Mammary epithelial cell (primary cell): ENCODE measurements at regions of chr3 and their contacts with region 1.

Region 1: DNA sequence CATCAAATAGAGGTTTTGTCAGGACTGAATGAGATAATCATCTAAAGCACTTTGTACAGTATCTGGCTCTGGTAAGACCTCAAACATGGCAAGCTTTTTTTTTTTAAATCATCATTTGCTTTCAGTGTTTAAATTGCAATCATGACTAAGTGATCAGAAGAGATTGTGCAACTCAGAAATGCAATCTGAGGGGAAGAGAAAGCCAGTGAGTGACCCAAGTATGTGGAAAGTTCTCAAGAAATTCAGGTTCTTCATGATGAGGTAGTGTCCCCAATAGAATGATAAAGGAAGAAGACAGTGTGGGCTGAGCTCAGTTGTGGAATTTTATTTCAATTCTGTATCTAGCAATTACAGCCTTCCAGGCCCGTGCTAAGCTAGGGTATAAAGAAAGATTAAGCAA is 132.2 kb upstream of the TBC1D5 start:
- DNase-seq: no peak
- H3K4me3 ChIP-seq: no peak overlapping the region
- H3K27ac ChIP-seq: no peak overlapping the region
- H3K4me1 ChIP-seq: no peaks in the 10 kb centered on the region
- H3K27me3 ChIP-seq: no peaks in the 10 kb centered on the region
- CTCF ChIP-seq: no peak

Region 2: GRCh38 chr3:16378920-16379319 is 1495.7 kb before region 1 on chr3:
- CTCF ChIA-PET with region 1: interaction called, 21 read pairs
- dilution Hi-C with region 1: no loop called
- in situ Hi-C with region 1: no loop called
- intact Hi-C with region 1: no loop called
- DNase-seq: peak; percentile 56
- H3K4me3 ChIP-seq: no peak overlapping the region
- H3K27ac ChIP-seq: no peak overlapping the region
- H3K4me1 ChIP-seq: no peaks in the 10 kb centered on the region
- H3K27me3 ChIP-seq: no peaks in the 10 kb centered on the region
- CTCF ChIP-seq: no peak

Region 3: GRCh38 chr3:17841190-17841828 is 33.3 kb before region 1 on chr3:
- CTCF ChIA-PET with region 1: no interaction called
- dilution Hi-C with region 1: no loop called
- in situ Hi-C with region 1: no loop called
- intact Hi-C with region 1: no loop called
- DNase-seq: peak; percentile 23
- H3K4me3 ChIP-seq: no peak overlapping the region
- H3K27ac ChIP-seq: no peak overlapping the region
- H3K4me1 ChIP-seq: no peaks in the 10 kb centered on the region
- H3K27me3 ChIP-seq: no peaks in the 10 kb centered on the region
- CTCF ChIP-seq: peak; percentile 98